ENCODE measurements at regions of chr17 and their contacts with region 1.

Region 1: GRCh38 chr17:83079352-83079747 is at the start of gene METRNL:
- DNase-seq: peak in 1 of 2 donors; percentile 88
- H3K4me3 ChIP-seq: peak within 1 kb of the TSS; percentile 95 to 98
- H3K27ac ChIP-seq: peak within 1 kb of the TSS; percentile 92 to 97
- H3K4me1 ChIP-seq: peaks cover 17 to 36% of the 10 kb centered on the region in 2 donors
- H3K27me3 ChIP-seq: no peaks in the 10 kb centered on the region
- CTCF ChIP-seq: no peak
- total RNA-seq, gene METRNL: 257 TPM

Region 2: DNA sequence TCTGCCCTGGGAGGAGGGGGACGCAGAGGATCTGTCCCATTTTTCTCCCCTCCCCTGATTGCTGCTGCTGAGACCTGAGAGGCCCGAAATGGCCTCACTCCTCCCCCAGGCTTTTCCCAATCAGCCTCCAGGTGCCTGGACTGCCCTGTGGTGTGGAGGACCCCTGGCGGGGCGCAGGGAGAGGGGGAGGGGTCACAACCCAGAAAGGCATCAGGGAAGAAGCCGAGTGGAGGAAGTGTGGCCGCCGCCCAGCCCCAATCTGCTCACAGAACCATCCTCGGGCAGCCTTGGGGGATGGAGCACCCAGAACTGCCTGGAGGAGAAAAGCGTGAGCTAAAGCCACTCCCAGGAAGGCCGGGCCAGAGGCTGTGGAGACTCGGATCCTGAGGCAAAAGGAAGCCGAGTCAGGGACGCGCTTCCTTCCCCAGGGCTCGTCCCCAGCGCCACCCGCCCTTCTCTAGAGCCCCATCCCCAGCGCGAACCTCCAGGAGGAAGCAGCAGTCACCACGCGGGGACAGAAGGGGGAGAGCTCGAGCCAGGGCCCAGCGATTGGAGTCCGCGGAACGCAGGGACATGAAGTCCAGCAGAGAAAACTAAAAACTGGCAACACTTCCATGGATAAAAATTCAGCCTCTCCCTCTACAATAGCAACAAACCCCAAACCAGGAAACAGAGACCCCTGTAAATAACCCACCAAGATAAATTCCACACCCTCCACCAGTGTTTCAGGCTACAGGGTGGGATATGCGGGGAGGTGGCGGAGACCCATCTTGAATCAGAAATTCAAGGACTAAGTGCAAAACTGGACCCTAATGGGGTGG is 116.3 kb before region 1 on chr17:
- intact Hi-C with region 1: loop called (anchors 5 kb)
- DNase-seq: peak in 1 of 2 donors; percentile 89
- H3K4me3 ChIP-seq: peak overlapping the region; percentile 28 to 34
- H3K27ac ChIP-seq: peak overlapping the region in 1 of 2 donors; percentile 78
- H3K4me1 ChIP-seq: peaks cover 0 to 9% of the 10 kb centered on the region in 2 donors
- H3K27me3 ChIP-seq: no peaks in the 10 kb centered on the region
- CTCF ChIP-seq: peak; percentile 77 to 89 (median 79)

Region 3: DNA sequence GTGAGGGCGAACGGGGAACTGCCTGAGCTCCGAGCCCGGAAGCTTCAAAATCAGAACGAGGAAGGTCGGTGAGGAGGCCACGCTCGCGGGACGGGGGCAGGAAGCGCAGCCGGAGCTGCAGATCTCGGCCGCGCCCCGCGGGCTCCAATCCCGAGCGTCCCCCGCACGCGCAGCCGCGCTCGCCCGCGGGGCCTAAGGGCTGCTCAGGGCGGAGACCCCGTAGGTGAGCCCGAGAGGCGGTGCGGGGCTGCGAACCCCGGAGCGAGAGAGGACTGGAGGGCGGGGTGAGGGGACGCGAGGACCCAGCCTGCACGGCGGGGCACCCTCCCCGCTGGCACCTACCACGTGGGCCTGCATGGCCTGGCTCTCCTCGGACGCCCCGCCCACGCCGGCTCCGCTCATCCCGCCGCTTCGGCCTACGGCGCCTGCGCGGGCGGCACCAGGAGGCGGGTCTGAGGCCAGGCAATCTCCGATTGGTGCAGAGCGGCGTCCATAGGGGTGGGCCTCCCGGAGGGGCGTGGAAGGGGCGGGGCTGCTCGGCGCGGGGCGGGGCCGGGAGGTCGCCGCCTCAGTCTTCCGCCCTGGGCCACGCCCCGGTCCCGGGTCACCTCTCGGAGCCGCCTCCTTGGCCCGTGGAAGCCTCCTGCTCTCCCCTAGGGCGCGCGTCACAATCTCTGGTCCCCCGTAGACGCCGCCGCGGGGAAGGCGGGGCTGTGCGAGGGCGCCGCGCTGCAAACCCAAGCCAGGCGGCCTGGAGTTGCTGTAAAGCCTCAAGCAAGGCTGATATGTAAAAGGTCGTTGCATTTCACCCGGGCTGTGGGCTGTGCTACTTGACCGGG is 27.7 kb before region 1 on chr17:
- intact Hi-C with region 1: loop called (anchors 1 kb)
- DNase-seq: peak; percentile 91 to 99
- H3K4me3 ChIP-seq: peak overlapping the region; percentile 63 to 98
- H3K27ac ChIP-seq: peak overlapping the region; percentile 83 to 84
- H3K4me1 ChIP-seq: peaks cover 8 to 17% of the 10 kb centered on the region in 2 donors
- H3K27me3 ChIP-seq: no peaks in the 10 kb centered on the region
- CTCF ChIP-seq: no peak

Region 4: GRCh38 chr17:83099570-83100231 is 20.4 kb after region 1 on chr17:
- intact Hi-C with region 1: loop called (anchors 2 kb)
- DNase-seq: peak in 1 of 2 donors; percentile 90
- H3K4me3 ChIP-seq: peak overlapping the region; percentile 59 to 60
- H3K27ac ChIP-seq: peak overlapping the region; percentile 85 to 93
- H3K4me1 ChIP-seq: peaks cover 24 to 56% of the 10 kb centered on the region in 2 donors
- H3K27me3 ChIP-seq: no peaks in the 10 kb centered on the region
- CTCF ChIP-seq: no peak

Measured in ascending aorta (tissue), 2 donors.